ENCODE measurements at regions of chr20 and their contacts with region 1.

Region 1: GRCh38 chr20:21505161-21505809 is 8.6 kb downstream of the NKX2-2 start:
- DNase-seq: peak; percentile 55
- H3K4me3 ChIP-seq: peak overlapping the region; percentile 55 to 67 (median 61)
- H3K27ac ChIP-seq: no peak overlapping the region
- H3K4me1 ChIP-seq: peaks cover 12% of the 10 kb centered on the region
- H3K27me3 ChIP-seq: peaks cover 27% of the 10 kb centered on the region
- CTCF ChIP-seq: peak; percentile 93 to 98

Region 2: GRCh38 chr20:20860078-20860806 is 645.0 kb before region 1 on chr20:
- CTCF ChIA-PET with region 1: no interaction called
- dilution Hi-C with region 1: no loop called
- in situ Hi-C with region 1: loop called (anchors 10 kb)
- intact Hi-C with region 1: loop called (anchors 1 kb)
- DNase-seq: peak; percentile 72
- H3K4me3 ChIP-seq: no peak overlapping the region
- H3K27ac ChIP-seq: no peak overlapping the region
- H3K4me1 ChIP-seq: no peaks in the 10 kb centered on the region
- H3K27me3 ChIP-seq: no peaks in the 10 kb centered on the region
- CTCF ChIP-seq: peak; percentile 93 to 98

Region 3: GRCh38 chr20:21303061-21303871 is 202.0 kb before region 1 on chr20 and contains the start of gene XRN2:
- CTCF ChIA-PET with region 1: no interaction called
- dilution Hi-C with region 1: no loop called
- in situ Hi-C with region 1: no loop called
- intact Hi-C with region 1: loop called (anchors 5 kb)
- DNase-seq: peak; percentile 95
- H3K4me3 ChIP-seq: peak within 1 kb of the TSS; percentile 64 to 92 (median 83)
- H3K27ac ChIP-seq: peak within 1 kb of the TSS; percentile 79
- H3K4me1 ChIP-seq: peaks cover 9% of the 10 kb centered on the region
- H3K27me3 ChIP-seq: no peaks in the 10 kb centered on the region
- CTCF ChIP-seq: peak in 1 of 2 donors; percentile 19
- total RNA-seq, gene XRN2: 64.9 to 70.8 TPM

Region 4: GRCh38 chr20:21571841-21572690 is 66.8 kb after region 1 on chr20:
- CTCF ChIA-PET with region 1: no interaction called
- dilution Hi-C with region 1: no loop called
- in situ Hi-C with region 1: no loop called
- intact Hi-C with region 1: loop called (anchors 1 kb)
- DNase-seq: no peak
- H3K4me3 ChIP-seq: no peak overlapping the region
- H3K27ac ChIP-seq: no peak overlapping the region
- H3K4me1 ChIP-seq: peaks cover 4% of the 10 kb centered on the region
- H3K27me3 ChIP-seq: no peaks in the 10 kb centered on the region
- CTCF ChIP-seq: peak; percentile 76 to 77

Region 5: DNA sequence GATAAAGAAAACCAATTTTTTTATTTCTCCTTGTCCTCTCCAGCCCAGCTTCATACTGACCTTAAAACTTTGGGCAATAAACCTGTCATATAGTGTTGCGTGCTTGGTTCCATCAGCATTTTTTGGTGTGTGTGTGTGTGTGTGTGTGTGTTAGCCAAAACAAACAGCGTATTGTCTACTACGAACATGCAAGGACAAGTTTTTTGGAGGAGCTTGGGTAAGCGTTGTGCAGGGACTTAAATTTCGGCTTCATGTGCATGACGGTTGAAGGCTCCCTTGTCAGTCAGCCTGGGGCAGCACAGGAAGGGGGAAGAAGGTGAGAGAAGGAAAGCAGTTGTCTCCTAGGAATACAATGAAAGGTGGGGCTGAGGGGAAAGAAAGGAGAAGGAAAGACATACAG is 138.1 kb after region 1 on chr20:
- CTCF ChIA-PET with region 1: no interaction called
- dilution Hi-C with region 1: no loop called
- in situ Hi-C with region 1: no loop called
- intact Hi-C with region 1: no loop called
- DNase-seq: peak; percentile 33
- H3K4me3 ChIP-seq: no peak overlapping the region
- H3K27ac ChIP-seq: no peak overlapping the region
- H3K4me1 ChIP-seq: no peaks in the 10 kb centered on the region
- H3K27me3 ChIP-seq: no peaks in the 10 kb centered on the region
- CTCF ChIP-seq: no peak

Measured in mammary epithelial cell (primary cell).